ENCODE measurements at regions of chr19 and their contacts with region 1.

Region 1: DNA sequence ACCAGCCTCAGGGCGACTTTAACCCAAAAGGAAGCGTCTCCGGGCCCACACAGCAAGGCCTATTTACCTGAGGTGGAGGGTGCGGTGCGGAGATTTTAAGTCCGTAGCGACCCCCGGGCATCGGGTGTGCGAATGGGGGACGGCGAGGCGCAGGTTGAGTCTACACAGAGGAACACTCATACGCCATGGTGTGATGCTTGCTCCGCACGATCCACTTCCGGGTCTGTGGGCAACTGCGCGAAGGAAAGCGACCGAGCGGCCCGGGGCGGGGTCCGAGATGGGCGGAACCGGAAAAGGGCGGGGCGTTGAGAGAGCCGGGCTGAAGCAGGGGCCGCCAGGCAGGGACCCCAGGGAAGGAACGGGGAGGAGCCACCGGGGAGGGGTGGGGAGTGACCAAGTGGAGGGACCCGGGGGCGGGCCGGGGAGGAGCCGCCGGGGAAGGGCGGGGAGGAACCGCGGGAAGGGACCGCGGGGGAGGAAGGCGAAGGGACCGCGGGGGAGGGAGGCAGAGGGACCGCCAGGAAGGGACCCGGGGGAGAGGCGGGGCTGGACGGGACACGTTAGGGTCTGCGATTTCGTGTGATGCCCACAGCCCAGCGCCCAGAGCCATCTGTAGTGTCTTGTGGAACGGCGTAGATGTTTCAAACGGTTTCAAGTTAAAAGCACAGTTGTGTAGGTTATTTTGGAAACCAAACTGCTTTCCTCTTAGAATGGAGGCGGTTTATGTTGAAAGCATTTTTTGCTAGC is at the start of gene ZNF160:
- DNase-seq: peak; percentile 92 to 99
- H3K4me3 ChIP-seq: peak within 1 kb of the TSS; percentile 69 to 76
- H3K27ac ChIP-seq: peak within 1 kb of the TSS; percentile 87 to 89
- H3K4me1 ChIP-seq: peaks cover 3 to 13% of the 10 kb centered on the region in 2 donors
- H3K27me3 ChIP-seq: no peaks in the 10 kb centered on the region
- CTCF ChIP-seq: no peak
- total RNA-seq, gene ZNF160: 124 TPM

Region 2: DNA sequence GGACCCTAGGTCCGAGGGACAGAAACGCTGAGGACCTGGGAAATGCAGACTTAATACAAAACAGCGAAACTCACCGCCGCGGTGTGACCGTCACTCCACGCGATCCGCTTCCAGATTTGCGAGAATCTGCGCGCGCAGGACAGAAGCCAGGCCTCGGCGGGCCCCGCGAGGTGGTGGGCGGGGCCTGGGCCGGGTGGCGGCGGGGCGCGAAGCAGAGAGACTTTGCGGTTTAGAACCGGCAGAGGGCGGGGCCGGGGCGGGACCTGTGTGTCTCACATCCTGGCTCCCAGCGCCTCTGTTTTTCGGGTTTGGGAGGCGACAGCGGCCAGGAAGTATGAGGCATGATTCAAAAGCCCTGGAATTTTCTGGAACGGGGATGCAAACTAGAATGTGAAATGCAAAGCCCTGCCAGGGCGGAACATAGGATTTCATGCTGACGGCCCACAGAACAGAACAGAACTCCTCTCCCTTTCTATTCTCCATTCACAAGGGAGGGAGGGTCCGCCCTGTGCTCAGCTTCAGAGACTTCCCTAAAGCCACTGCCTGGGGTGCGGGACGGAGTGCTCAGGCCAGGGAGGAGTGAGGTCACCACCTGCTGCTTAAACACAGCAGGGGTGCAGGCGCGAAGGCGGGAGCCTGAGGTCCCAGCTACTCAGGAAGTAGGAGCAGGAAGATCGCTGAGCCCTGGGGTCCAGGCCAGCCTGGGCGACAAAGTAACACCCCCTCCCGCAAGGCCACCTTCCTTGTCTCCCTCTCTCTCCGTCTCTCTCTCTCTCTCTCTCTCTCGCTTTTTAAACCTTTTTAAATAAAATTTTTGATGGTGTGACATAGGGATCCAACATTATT is 412.8 kb before region 1 on chr19:
- intact Hi-C with region 1: loop called (anchors 1 kb)
- DNase-seq: peak; percentile 89 to 98
- H3K4me3 ChIP-seq: peak overlapping the region; percentile 56 to 89
- H3K27ac ChIP-seq: peak overlapping the region; percentile 95 to 98
- H3K4me1 ChIP-seq: peaks cover 3 to 28% of the 10 kb centered on the region in 2 donors
- H3K27me3 ChIP-seq: no peaks in the 10 kb centered on the region
- CTCF ChIP-seq: peak in 2 of 3 experiments; percentile 16 to 19

Region 3: GRCh38 chr19:52897144-52897935 is 206.0 kb before region 1 on chr19 and contains the start of gene ZNF320:
- intact Hi-C with region 1: loop called (anchors 1 kb)
- DNase-seq: peak; percentile 92 to 98
- H3K4me3 ChIP-seq: peak within 1 kb of the TSS; percentile 77 to 93
- H3K27ac ChIP-seq: peak within 1 kb of the TSS; percentile 92 to 94
- H3K4me1 ChIP-seq: peaks cover 5 to 10% of the 10 kb centered on the region in 2 donors
- H3K27me3 ChIP-seq: no peaks in the 10 kb centered on the region
- CTCF ChIP-seq: no peak
- total RNA-seq, gene ZNF320: not detected

Region 4: DNA sequence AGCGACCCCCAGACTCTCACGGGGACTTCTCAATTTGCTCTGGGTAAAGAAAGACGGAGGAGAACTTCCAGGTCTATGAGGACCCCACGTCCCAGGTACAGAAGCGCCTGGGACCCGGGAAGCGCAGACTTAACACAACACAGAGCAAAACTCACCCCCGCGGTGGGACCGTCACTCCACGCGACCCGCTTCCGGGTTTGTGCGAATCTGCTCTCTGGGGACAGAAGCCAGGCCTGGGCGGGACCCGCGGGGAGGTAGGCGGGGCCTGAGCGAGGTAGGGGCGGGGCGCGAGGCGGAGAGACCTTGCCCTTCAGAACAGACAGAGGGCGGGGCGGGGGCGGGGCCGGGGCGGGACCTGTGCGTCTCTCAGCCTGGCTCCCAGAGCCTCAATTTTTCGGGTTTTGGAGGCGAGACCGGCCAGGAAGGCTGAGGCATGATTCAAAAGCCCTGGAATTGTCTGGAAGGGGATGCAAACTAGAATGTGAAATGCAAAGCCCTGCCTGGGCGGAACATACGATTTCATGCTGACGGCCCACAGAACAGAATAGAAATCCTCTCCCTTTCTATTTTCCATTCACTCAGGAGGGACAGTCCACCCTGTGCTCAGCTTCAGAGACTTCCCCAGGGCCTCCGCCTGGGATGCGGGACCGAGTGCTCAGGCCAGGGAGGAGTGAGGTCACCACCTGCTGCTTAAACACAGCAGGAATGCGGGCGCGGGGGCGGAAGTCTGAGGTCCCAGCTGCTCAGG is 160.8 kb before region 1 on chr19:
- intact Hi-C with region 1: loop called (anchors 1 kb)
- DNase-seq: peak; percentile 81 to 98
- H3K4me3 ChIP-seq: peak overlapping the region; percentile 59 to 78
- H3K27ac ChIP-seq: peak overlapping the region; percentile 84 to 86
- H3K4me1 ChIP-seq: peaks cover 0 to 4% of the 10 kb centered on the region in 2 donors
- H3K27me3 ChIP-seq: no peaks in the 10 kb centered on the region
- CTCF ChIP-seq: no peak

Region 5: DNA sequence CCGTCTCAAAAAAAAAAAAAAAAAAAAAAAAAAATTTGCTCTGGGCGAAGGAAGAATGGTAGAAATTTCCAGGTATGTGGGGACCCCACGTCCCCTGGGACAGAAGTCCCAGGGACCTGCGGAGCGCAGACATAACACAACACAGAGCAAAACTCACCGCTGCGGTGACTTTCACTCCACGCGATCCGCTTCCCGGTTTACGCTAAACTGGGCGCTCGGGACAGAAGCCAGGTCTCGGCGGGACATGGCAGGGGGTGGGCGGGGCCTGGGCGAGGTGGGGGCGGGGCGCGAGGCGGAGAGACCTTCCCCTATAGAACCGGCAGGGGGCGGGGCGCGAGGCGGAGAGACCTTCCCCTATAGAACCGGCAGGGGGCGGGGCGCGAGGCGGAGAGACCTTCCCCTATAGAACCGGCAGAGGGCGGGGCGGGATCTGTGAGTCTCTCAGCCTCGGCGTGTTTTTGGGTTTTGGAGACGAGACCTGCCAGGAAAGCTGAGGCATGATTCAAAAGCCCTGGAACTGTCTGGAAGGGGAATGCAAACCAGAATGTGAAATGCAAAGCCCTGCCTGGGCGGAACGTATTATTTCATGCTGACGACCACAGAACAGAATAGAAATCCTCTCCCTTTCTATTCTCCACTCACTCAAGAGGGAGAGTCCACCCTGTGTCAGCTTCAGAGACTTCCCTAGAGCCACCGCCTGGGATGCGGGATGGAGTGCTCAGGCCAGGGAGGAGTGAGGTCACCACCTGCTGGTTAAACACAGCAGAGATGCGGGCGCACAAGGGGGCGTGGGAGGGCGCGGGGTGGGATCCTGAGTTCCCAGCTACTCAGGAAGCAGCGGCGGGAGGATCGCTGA is 109.8 kb before region 1 on chr19:
- intact Hi-C with region 1: loop called (anchors 2 kb)
- DNase-seq: peak; percentile 51 to 91
- H3K4me3 ChIP-seq: peak overlapping the region; percentile 61 to 71
- H3K27ac ChIP-seq: peak overlapping the region; percentile 79 to 81
- H3K4me1 ChIP-seq: peaks cover 8 to 10% of the 10 kb centered on the region in 2 donors
- H3K27me3 ChIP-seq: no peaks in the 10 kb centered on the region
- CTCF ChIP-seq: peak; percentile 38 to 77 (median 61)

Region 6: GRCh38 chr19:53365134-53365898 is 261.9 kb after region 1 on chr19 and contains the start of gene ZNF525:
- intact Hi-C with region 1: loop called (anchors 1 kb)
- DNase-seq: peak; percentile 81 to 94
- H3K4me3 ChIP-seq: peak within 1 kb of the TSS; percentile 63 to 67
- H3K27ac ChIP-seq: peak within 1 kb of the TSS; percentile 73 to 81
- H3K4me1 ChIP-seq: peaks cover 0 to 6% of the 10 kb centered on the region in 2 donors
- H3K27me3 ChIP-seq: no peaks in the 10 kb centered on the region
- CTCF ChIP-seq: peak in 1 of 3 experiments; percentile 26
- total RNA-seq, gene ZNF525: 3.0 TPM